Activated CD4-positive, alpha-beta memory T cell treated with anti-CD3 and anti-CD28 coated beads for 36 hours (primary cell): ENCODE measurements at regions of chr20 and their contacts with region 1.

Region 1: DNA sequence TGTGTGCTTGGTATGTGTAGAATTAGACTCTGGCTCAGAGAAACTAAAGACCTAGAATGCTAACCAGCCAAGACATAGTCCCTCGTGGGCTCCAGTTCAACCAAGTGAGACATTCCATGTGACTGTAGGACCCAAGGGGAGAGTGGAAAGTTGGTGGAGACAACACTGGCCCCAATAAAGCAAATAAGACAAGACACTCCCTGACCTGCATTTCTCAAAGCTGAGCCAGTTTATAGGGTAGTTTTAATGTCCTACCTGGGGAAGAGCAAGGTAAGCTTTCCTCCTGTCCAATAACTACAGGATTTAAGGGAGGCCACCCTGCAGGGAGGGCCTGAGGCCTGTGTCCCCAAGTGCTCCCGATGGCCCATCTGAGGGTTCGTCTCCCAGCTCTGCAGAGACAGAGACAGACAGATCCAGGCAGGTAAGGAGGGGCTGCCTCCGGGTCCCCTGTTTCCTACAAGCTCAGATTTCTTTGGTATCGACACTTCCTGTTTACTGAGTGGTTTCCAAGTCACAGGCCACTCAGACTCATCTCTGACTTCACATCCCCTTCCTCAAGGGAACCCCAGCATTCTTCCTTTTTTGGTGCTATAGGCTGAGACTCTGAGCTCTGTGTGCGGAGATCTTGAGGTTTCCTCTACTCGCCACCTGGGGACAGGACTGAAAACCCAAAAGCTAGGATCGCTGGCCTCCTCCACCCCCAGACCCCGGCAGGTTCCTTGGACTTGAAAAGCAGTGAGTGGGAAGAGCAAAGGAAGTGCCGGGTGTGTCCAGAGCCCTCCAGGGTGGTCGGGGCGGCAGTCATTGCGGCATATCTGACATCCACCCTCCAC is 92.4 kb downstream of the PRND start:
- DNase-seq: peak; percentile 74
- H3K4me3 Mint-ChIP-seq: peak overlapping the region; percentile 90
- H3K27ac Mint-ChIP-seq: peak overlapping the region; percentile 99
- H3K4me1 Mint-ChIP-seq: peaks cover 74% of the 10 kb centered on the region
- H3K27me3 Mint-ChIP-seq: no peaks in the 10 kb centered on the region

Region 2: GRCh38 chr20:4702562-4703280 is 111.4 kb before region 1 on chr20:
- CTCF ChIA-PET with region 1: no interaction called
- POLR2A ChIA-PET with region 1: no interaction called
- intact Hi-C with region 1: no loop called
- DNase-seq: no peak
- H3K4me3 Mint-ChIP-seq: no peak overlapping the region
- H3K27ac Mint-ChIP-seq: no peak overlapping the region
- H3K4me1 Mint-ChIP-seq: peaks cover 11% of the 10 kb centered on the region
- H3K27me3 Mint-ChIP-seq: no peaks in the 10 kb centered on the region

Region 3: DNA sequence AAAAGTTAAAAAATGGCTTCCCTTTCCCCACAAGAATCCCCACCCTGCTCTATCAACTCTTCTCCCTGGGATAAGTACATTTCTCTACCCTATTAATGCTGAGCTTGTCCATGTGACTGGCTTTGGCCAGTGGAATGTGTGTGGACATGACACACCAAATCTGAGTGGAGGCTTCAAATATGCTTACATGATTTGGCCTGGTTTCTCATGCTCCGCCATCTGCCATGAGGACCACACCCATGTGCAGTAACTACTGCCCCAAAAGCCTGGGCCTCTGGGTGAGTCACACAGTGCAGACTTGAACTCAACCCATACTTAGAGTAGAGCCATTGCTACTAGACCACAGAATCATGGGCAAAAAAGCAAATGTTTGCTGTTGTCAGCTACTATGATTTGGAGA is 27.0 kb before region 1 on chr20:
- CTCF ChIA-PET with region 1: no interaction called
- POLR2A ChIA-PET with region 1: interaction called, 10 read pairs
- intact Hi-C with region 1: no loop called
- DNase-seq: no peak
- H3K4me3 Mint-ChIP-seq: no peak overlapping the region
- H3K27ac Mint-ChIP-seq: peak overlapping the region; percentile 52
- H3K4me1 Mint-ChIP-seq: peaks cover 12% of the 10 kb centered on the region
- H3K27me3 Mint-ChIP-seq: no peaks in the 10 kb centered on the region

Region 4: GRCh38 chr20:4795394-4795793 is 18.7 kb before region 1 on chr20:
- CTCF ChIA-PET with region 1: interaction called, 6 read pairs
- POLR2A ChIA-PET with region 1: interaction called, 12 read pairs
- intact Hi-C with region 1: loop called (anchors 1 kb)
- DNase-seq: peak; percentile 76
- H3K4me3 Mint-ChIP-seq: no peak overlapping the region
- H3K27ac Mint-ChIP-seq: peak overlapping the region; percentile 72
- H3K4me1 Mint-ChIP-seq: peaks cover 25% of the 10 kb centered on the region
- H3K27me3 Mint-ChIP-seq: no peaks in the 10 kb centered on the region

Region 5: DNA sequence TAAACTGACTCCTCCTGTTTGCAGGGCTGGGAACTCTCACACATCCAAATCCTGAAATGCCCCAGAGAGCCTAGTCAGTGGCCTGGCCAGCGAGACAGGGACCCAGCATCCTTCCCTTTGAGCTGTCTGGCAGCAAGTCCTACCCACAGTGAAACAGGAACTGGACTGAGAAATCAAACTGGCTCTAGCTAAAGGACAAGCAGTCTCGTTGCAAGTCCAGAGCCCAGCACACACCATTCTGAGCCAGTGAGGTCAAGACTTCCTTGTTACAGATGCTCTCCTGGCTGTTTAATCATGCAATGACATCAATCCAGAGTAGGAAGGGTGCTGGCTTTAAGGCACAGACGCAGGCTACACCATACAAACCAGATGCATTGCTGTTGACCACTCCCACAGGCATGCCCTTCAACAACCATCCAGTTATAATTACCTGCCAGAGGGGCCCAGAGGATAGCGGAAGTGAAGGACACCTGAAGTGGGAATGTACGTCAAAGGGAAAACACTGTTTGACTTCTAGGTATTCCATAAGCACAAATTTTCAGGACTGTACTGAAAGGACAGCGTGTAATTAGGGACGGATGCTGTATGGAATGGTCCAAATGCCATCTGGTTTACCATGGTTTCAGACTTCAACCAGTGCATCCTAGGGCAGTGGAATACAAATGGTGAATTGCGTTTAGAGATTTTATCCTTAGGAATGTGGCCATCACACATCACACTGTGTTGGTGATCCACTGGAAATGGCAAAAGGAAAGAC is 72.9 kb after region 1 on chr20:
- CTCF ChIA-PET with region 1: no interaction called
- POLR2A ChIA-PET with region 1: no interaction called
- intact Hi-C with region 1: no loop called
- DNase-seq: no peak
- H3K4me3 Mint-ChIP-seq: no peak overlapping the region
- H3K27ac Mint-ChIP-seq: no peak overlapping the region
- H3K4me1 Mint-ChIP-seq: no peaks in the 10 kb centered on the region
- H3K27me3 Mint-ChIP-seq: no peaks in the 10 kb centered on the region

Region 6: GRCh38 chr20:4949833-4950178 is 135.7 kb after region 1 on chr20:
- CTCF ChIA-PET with region 1: interaction called, 3 read pairs
- POLR2A ChIA-PET with region 1: interaction called, 4 read pairs
- intact Hi-C with region 1: loop called (anchors 2 kb)
- DNase-seq: peak; percentile 68
- H3K4me3 Mint-ChIP-seq: peak overlapping the region; percentile 59
- H3K27ac Mint-ChIP-seq: peak overlapping the region; percentile 60
- H3K4me1 Mint-ChIP-seq: peaks cover 40% of the 10 kb centered on the region
- H3K27me3 Mint-ChIP-seq: no peaks in the 10 kb centered on the region

Region 7: GRCh38 chr20:5001174-5002076 is 187.3 kb after region 1 on chr20 and contains the start of gene SLC23A2:
- CTCF ChIA-PET with region 1: no interaction called
- POLR2A ChIA-PET with region 1: no interaction called
- intact Hi-C with region 1: loop called (anchors 5 kb)
- DNase-seq: peak; percentile 65
- H3K4me3 Mint-ChIP-seq: peak within 1 kb of the TSS; percentile 90
- H3K27ac Mint-ChIP-seq: peak within 1 kb of the TSS; percentile 69
- H3K4me1 Mint-ChIP-seq: peaks cover 33% of the 10 kb centered on the region
- H3K27me3 Mint-ChIP-seq: no peaks in the 10 kb centered on the region
- total RNA-seq, gene SLC23A2: 14.0 to 14.9 TPM

Region 8: DNA sequence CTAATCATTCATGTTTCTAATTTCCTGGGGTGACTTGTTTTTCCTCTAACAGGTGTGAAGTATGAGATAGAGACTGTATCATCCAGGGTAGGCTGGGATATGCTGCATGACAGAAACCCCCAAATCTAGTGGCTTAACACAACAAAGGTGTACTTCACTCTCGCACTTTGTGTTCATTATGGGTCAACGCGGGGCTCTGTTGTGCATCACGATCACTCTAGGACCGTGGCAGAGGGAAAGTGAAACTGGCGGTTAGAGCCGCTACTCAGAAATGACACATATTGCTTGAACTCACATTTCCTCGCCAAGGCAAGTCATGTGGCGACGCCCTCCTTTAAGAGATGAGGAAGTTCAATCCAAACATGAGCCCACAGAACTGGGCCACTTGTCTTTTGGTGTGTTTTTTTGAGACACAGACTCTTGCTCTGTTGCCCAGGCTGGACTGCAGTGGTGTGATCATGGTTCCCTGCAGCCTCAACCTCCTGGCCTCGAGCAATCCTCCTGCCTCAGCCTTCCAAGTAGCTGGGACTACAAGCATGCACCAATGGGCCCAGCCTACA is 264.4 kb after region 1 on chr20:
- CTCF ChIA-PET with region 1: no interaction called
- POLR2A ChIA-PET with region 1: interaction called, 3 read pairs
- intact Hi-C with region 1: loop called (anchors 2 kb)
- DNase-seq: peak; percentile 92
- H3K4me3 Mint-ChIP-seq: peak overlapping the region; percentile 60
- H3K27ac Mint-ChIP-seq: peak overlapping the region; percentile 90
- H3K4me1 Mint-ChIP-seq: peaks cover 37% of the 10 kb centered on the region
- H3K27me3 Mint-ChIP-seq: no peaks in the 10 kb centered on the region

Region 9: GRCh38 chr20:5119435-5120188 is 305.5 kb after region 1 on chr20 and contains the start of gene PCNA:
- CTCF ChIA-PET with region 1: no interaction called
- POLR2A ChIA-PET with region 1: interaction called, 16 read pairs
- intact Hi-C with region 1: no loop called
- DNase-seq: peak; percentile 99
- H3K4me3 Mint-ChIP-seq: peak within 1 kb of the TSS; percentile 90
- H3K27ac Mint-ChIP-seq: peak within 1 kb of the TSS; percentile 95
- H3K4me1 Mint-ChIP-seq: peaks cover 47% of the 10 kb centered on the region
- H3K27me3 Mint-ChIP-seq: no peaks in the 10 kb centered on the region
- total RNA-seq, gene PCNA: 554 to 560 TPM